Cardiac septum (tissue), 1 donor: ENCODE measurements at regions of chr18 and their contacts with region 1.

Region 1: GRCh38 chr18:45839414-45840395 is 14.2 kb downstream of the SIGLEC15 start:
- DNase-seq: no peak

Region 2: DNA sequence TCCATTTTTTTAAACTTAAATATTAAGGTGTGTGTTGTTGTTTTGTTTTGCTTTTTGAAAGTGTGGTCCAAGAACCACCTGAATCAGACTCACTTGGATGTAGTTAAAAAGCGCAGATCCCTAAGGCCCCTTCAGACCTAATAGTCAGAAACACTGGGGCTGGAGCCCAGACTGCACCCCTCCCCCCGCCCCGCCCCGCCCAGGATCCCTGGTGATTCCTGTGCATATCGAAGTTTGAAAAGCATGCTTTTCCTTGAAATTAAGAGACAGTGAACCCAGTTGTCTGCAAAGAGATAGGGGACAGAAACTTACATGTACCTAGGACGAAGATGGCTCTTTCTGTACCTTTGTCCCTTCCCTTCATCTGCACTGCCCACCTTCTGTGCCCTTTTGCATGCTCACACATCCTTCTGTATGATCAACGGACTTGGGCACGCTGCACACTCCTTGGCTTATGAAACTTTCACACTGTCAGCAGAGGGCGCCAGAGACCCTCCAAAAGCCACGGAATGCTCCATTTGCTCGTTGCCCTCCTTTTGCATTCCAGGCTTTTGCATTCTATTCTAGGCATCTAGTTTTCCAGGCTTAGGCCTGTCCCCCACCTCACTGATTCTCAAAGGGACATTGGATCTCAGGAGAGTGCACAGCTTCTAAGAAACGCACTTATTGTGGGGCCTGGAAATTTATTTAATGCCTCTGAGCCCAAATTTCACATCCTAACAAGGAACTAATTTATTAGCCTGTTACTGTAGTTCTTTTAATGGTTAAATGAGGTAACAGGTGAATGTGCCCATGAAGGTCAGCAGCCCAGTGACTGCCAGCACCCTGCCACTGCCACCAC is 148.5 kb before region 1 on chr18:
- intact Hi-C with region 1: loop called (anchors 5 kb)
- DNase-seq: peak; percentile 82

Region 3: GRCh38 chr18:45722899-45723298 is 116.8 kb before region 1 on chr18:
- intact Hi-C with region 1: loop called (anchors 2 kb)
- DNase-seq: peak; percentile 88

Region 4: DNA sequence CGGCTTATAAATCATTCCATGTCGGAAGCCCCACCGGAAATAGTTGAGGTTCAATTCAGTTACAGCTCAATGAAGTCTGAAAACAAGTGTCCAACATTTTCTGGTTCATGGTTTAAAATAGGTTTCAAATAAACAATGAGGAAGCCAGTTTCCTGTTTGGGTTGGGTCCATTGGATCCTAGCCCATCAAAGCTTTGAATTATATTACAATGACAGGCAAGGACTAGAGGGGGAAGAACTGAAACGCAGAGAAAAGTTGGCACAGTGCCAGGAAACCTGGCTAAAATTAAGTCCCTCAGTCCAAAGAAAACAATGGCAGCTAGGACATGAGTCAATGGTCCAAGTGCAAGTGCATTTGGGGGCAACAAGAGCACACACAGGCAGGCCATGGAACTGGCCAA is 83.8 kb before region 1 on chr18:
- intact Hi-C with region 1: no loop called
- DNase-seq: no peak

Region 5: DNA sequence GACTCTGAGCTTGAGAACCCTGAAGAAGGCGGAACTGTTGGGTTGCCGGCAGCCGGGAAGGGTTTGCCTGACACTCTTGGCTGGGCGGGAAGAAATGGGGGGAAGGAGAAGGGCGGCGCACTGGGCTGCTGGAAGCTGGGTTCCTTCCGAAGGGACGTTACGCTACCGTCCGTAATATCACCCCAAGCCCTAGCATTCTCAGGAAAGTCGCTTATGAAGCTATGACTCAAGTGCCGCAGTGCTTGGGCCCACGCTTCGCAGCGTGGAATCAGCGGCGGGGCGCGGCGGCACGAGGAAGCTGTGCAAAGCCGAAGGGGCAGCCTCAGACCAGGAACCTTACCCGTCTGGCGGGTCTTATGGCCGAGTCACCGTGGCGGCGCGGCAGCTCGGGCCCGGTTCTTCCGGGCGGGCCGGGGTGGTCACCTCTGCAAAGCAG is 64.4 kb before region 1 on chr18:
- intact Hi-C with region 1: loop called (anchors 5 kb)
- DNase-seq: peak; percentile 84